Activated CD4-positive, alpha-beta memory T cell treated with anti-CD3 and anti-CD28 coated beads for 36 hours (primary cell): ENCODE measurements at regions of chr9 and their contacts with region 1.

Region 1: GRCh38 chr9:33623658-33624586 is 99.9 kb downstream of the ANKRD18B start:
- DNase-seq: peak; percentile 78
- H3K4me3 Mint-ChIP-seq: no peak overlapping the region
- H3K27ac Mint-ChIP-seq: no peak overlapping the region
- H3K4me1 Mint-ChIP-seq: peaks cover 12% of the 10 kb centered on the region
- H3K27me3 Mint-ChIP-seq: peaks cover 20% of the 10 kb centered on the region

Region 2: GRCh38 chr9:33404788-33405362 is 219.0 kb before region 1 on chr9:
- CTCF ChIA-PET with region 1: no interaction called
- POLR2A ChIA-PET with region 1: no interaction called
- intact Hi-C with region 1: loop called (anchors 10 kb)
- DNase-seq: no peak
- H3K4me3 Mint-ChIP-seq: no peak overlapping the region
- H3K27ac Mint-ChIP-seq: no peak overlapping the region
- H3K4me1 Mint-ChIP-seq: peaks cover 7% of the 10 kb centered on the region
- H3K27me3 Mint-ChIP-seq: no peaks in the 10 kb centered on the region

Region 3: GRCh38 chr9:33489066-33489465 is 134.9 kb before region 1 on chr9:
- CTCF ChIA-PET with region 1: no interaction called
- POLR2A ChIA-PET with region 1: no interaction called
- intact Hi-C with region 1: no loop called
- DNase-seq: no peak
- H3K4me3 Mint-ChIP-seq: no peak overlapping the region
- H3K27ac Mint-ChIP-seq: no peak overlapping the region
- H3K4me1 Mint-ChIP-seq: no peaks in the 10 kb centered on the region
- H3K27me3 Mint-ChIP-seq: peaks cover 4% of the 10 kb centered on the region

Region 4: DNA sequence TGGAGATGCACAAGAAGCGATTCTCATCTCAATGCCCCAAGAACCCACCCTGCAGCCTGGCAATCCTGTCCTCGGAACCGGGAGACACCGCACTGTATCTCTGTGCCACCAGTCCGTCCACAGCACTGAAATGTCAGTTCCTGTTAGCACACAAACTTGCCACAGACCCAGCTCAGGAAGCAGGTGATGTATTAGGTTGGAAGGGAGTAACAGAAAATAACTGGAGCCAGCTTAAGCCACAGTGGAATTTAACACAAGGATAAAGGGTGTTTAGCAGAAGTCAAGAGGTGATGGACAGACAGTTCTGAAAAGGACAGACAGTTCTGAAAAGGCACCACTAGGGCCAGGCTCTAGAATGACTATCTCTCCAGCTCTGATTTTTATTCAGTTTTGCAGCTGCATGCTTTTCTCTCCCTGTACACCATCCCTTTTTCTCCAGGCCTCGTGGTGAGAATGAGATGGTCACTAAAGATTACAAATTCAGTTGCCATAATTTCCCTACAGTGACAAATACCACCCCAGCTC is 14.5 kb after region 1 on chr9:
- CTCF ChIA-PET with region 1: interaction called, 15 read pairs
- POLR2A ChIA-PET with region 1: no interaction called
- intact Hi-C with region 1: no loop called
- DNase-seq: no peak
- H3K4me3 Mint-ChIP-seq: no peak overlapping the region
- H3K27ac Mint-ChIP-seq: no peak overlapping the region
- H3K4me1 Mint-ChIP-seq: no peaks in the 10 kb centered on the region
- H3K27me3 Mint-ChIP-seq: peaks cover 50% of the 10 kb centered on the region

Region 5: DNA sequence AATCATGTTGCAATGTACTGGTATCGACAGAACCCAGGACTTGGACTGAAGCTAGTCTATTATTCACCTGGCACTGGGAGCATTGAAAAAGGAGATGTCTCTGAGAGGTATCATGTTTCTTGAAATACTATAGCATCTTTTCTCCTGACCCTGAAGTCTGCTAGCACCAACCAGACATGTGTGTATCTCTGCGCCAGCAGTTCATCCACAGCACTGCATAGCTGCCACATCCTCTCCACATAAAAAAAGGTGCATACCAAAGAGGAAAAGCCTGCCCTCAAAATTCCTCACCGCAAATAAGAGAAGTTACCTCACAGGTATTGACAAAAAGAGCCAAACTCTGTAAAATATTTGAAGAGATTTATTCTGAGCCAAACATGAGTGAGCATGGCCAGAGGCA is 71.9 kb after region 1 on chr9:
- CTCF ChIA-PET with region 1: interaction called, 16 read pairs
- POLR2A ChIA-PET with region 1: no interaction called
- intact Hi-C with region 1: no loop called
- DNase-seq: no peak
- H3K4me3 Mint-ChIP-seq: no peak overlapping the region
- H3K27ac Mint-ChIP-seq: no peak overlapping the region
- H3K4me1 Mint-ChIP-seq: peaks cover 2% of the 10 kb centered on the region
- H3K27me3 Mint-ChIP-seq: peaks cover 20% of the 10 kb centered on the region

Region 6: DNA sequence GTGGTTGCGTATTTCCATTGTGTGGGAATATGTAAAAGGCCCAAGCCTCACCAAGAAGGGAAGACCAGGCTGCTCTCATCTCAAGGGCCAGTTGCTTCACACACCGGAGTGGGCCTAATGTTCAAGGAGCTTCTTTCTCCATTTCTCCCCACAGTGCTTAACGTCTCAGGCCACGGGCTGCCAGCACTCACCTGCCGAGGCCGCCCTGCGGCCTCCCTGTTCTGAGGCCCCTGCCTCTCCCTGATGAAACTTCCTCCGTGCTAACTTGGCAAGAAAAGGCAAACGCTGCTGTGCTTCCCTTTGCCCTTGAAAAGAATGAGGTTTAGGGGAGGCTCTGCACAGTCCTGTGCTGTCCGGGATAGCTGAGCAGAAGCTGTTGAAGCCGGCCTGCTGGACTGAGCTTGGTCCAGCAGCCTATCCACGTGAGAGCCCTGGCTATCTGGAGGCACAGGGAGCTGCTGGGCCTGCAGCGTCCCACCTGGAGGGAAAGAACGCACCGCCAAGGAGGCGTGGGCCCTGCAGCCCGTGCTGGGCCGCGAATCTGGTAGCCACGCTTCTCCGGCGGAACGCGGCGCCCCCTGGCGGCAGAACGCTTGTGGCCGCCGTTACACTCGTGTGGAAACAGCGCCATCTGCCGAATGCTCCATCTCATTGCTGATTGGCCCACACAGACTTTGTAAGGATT is 97.9 kb after region 1 on chr9:
- CTCF ChIA-PET with region 1: interaction called, 404 read pairs
- POLR2A ChIA-PET with region 1: interaction called, 3 read pairs
- intact Hi-C with region 1: loop called (anchors 1 kb)
- DNase-seq: peak; percentile 91
- H3K4me3 Mint-ChIP-seq: no peak overlapping the region
- H3K27ac Mint-ChIP-seq: no peak overlapping the region
- H3K4me1 Mint-ChIP-seq: peaks cover 3% of the 10 kb centered on the region
- H3K27me3 Mint-ChIP-seq: peaks cover 6% of the 10 kb centered on the region

Region 7: DNA sequence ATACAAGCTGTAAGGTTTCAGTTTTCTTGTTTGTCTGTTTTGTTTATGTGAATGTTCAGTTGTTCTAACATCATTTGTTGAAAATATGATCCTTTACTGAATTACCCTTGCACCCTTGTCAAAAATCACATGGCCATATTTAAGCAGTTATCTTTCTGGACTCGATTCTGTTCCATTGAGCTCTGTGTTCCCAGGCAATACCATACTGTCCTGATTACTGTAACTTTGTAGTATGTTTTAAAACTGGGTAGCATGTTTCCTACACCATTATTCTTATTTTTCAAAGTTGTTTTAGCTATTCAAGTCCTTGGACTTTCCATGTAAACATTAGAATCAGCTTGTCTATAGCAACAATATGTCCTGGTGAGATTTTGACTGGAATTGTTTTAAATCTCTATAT is 104.7 kb after region 1 on chr9:
- CTCF ChIA-PET with region 1: interaction called, 404 read pairs
- POLR2A ChIA-PET with region 1: no interaction called
- intact Hi-C with region 1: no loop called
- DNase-seq: no peak
- H3K4me3 Mint-ChIP-seq: no peak overlapping the region
- H3K27ac Mint-ChIP-seq: no peak overlapping the region
- H3K4me1 Mint-ChIP-seq: no peaks in the 10 kb centered on the region
- H3K27me3 Mint-ChIP-seq: peaks cover 23% of the 10 kb centered on the region

Region 8: GRCh38 chr9:33778700-33779351 is 154.9 kb after region 1 on chr9:
- CTCF ChIA-PET with region 1: interaction called, 30 read pairs
- POLR2A ChIA-PET with region 1: no interaction called
- intact Hi-C with region 1: no loop called
- DNase-seq: peak; percentile 50
- H3K4me3 Mint-ChIP-seq: no peak overlapping the region
- H3K27ac Mint-ChIP-seq: no peak overlapping the region
- H3K4me1 Mint-ChIP-seq: peaks cover 3% of the 10 kb centered on the region
- H3K27me3 Mint-ChIP-seq: peaks cover 8% of the 10 kb centered on the region

Region 9: DNA sequence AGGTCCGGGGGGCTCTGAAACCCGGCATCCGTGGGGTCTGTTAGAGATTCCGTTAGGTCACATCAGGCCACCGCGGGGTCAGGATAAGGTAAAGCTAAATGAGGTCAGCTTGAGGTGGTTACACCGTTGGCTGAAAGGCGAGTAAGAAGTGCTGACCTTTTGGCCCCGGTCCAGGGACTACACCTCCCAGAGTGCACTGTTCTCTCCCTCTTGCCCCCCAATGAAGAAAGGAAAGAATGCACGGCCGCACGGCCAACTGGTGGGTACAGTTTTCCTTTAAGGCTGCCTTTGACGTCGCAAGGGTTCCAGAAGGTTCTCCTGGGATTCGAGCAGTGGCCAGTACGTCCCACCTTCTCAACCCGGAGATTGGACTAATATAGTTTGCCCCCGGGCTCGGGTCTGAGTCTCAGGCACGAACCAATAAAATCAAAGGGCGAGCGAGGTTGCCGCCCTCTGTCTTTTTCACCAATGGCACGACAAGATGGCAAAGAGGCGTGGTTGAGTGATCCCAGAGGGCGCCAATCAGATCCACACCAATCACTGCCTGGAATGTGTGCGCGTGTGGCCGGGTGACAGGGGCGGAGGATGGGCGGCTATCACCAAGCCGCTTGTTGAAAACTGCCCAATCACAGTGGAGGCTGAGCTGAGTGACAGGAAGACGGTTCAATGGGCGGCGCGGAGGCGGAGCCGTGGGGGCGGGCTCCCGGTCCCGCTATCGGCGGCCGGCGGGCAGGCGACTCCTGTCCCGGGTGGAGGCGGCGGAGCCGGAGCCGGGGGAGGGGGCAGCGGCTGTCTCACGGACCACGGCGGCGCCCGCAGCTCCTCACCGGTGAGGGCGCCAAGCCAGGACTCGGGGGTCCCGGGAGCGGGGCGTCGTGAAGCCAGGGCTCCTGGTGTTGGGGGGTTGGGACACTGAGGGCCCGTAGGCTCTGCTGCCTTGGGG is 1365.4 kb after region 1 on chr9 and contains the start of gene DNAJB5:
- CTCF ChIA-PET with region 1: no interaction called
- POLR2A ChIA-PET with region 1: no interaction called
- intact Hi-C with region 1: no loop called
- DNase-seq: peak; percentile 99
- H3K4me3 Mint-ChIP-seq: peak within 1 kb of the TSS; percentile 89
- H3K27ac Mint-ChIP-seq: peak within 1 kb of the TSS; percentile 89
- H3K4me1 Mint-ChIP-seq: peaks cover 81% of the 10 kb centered on the region
- H3K27me3 Mint-ChIP-seq: no peaks in the 10 kb centered on the region
- total RNA-seq, gene DNAJB5: 11.5 to 12.0 TPM